ENCODE measurements at regions of chr9 and their contacts with region 1.

Region 1: DNA sequence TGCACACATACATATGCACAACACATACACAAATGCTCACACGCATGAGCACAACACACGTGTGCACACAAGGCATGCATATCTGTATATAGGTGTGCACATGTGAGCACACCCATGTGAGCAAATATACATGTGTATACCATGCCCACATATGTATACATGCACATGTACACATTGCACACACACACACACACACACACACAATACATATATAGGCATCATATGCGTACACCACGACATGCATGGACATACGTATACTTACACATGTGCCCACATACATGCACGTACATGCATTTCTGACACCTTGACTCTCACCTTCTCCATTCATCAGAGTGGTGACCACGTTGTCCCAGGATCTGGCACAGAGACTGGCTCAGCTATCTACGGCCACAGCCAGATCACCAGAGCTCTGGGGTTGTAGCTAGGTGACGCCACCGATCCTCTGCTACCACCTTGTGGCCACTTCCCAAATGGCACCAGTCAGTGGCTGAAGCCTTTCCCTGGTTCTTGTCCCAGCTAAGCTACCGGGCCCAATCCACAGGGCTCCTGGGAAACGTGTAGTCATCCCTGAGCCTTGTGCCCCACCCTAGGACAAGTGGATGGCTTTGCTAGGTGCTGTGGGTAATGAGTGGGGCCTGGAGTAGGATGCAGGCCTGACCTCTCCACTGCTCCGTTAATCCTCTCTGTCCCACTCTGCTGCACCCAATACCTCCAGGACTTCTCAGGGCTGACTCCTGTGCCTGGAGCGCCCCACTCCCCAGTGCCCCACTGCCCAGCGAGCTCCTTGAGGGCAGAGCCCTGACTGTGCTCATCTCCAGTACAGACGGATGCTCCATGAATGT is 194.4 kb downstream of the RGS3 start:
- DNase-seq: peak; percentile 72
- H3K4me3 ChIP-seq: no peak overlapping the region
- H3K27ac ChIP-seq: no peak overlapping the region
- H3K27me3 ChIP-seq: peaks cover 3% of the 10 kb centered on the region
- CTCF ChIP-seq: peak; percentile 97

Region 2: DNA sequence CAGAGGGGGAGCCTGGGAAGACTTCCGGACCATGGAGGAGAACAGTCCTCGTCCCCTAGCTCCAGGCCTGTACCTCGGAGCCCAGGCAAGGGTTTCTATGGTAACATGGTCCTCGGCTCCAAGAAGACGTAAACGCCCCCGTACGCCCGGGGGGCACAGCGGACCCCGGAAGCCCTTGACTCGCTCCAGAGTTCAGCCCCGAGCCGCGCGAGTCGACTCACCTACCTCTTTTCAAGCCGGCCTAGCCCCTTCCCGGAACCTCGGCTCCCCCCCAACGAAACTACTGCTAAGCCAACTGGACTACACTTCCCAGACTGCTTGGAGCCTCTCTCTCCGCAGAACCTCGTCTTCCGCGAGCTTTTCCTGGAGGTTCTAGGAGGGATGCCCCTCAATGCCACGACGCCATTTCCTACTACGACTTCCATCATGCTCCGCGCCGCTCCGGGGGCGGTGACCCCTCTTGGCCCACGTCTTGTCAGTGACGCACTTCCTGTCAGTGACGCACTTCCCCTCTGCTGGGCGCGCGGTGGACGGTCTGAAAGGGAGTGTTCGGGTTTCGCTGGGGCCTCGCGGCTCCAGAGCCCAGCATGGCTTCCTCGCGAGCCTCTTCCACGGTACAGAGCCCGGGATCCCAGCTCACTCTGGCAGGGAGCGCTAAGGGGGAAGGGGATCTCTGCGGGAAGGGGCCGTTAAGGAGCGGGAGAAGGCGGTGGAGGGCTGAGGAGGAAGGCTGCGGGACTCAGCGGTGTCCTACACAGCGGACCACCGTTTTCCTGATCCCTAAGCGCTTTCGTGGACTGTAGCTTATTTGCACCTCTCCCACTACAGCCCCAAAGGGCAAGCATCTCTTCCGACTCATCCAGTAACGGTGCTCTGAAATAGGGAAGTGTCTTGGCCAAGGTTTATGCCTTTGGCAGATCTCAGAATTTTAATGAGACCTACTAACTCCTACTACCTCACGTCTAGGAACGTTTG is 382.5 kb before region 1 on chr9 and contains the starts of genes CDC26 and PRPF4:
- CTCF ChIA-PET with region 1: interaction called, 20 read pairs
- POLR2A ChIA-PET with region 1: interaction called, 3 read pairs
- DNase-seq: peak; percentile 96
- H3K4me3 ChIP-seq: peak within 1 kb of the TSS; percentile 98
- H3K27ac ChIP-seq: peak within 1 kb of the TSS; percentile 94
- H3K27me3 ChIP-seq: no peaks in the 10 kb centered on the region
- CTCF ChIP-seq: no peak
- polyA plus RNA-seq, gene CDC26: 38.0 and 52.6 TPM in 2 replicates
- polyA plus RNA-seq, gene PRPF4: 20.1 and 20.9 TPM in 2 replicates

Region 3: DNA sequence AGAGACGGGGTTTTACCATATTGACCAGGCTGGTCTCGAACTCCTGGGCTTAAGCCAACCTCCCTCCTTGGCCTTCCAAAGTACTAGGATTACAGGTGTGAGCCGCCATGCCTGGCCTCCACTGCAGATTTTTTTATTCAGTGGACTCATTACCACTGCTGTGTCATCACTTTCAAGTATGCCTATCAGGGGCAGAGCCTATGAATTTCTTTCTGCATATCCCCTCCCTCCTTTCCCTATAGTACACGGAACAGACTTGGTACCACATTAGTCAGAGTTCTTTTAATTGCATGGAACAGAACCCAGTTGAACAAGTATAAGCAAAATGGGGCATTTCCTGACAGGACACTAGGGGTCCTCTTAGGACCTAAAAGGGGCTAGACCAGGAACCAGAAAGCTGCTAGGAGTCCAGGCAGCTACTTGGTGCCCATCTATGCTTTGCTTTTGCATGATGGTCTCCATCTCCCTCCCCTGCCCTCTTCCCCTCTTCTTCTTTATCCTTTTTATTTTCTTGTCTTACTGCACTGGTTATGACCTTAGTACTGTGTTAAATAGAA is 302.8 kb before region 1 on chr9:
- CTCF ChIA-PET with region 1: no interaction called
- POLR2A ChIA-PET with region 1: no interaction called
- DNase-seq: no peak
- H3K4me3 ChIP-seq: no peak overlapping the region
- H3K27ac ChIP-seq: no peak overlapping the region
- H3K27me3 ChIP-seq: peaks cover 57% of the 10 kb centered on the region
- CTCF ChIP-seq: peak; percentile 44

Region 4: GRCh38 chr9:113446323-113446740 is 211.6 kb before region 1 on chr9:
- CTCF ChIA-PET with region 1: interaction called, 137 read pairs
- POLR2A ChIA-PET with region 1: no interaction called
- DNase-seq: no peak
- H3K4me3 ChIP-seq: no peak overlapping the region
- H3K27ac ChIP-seq: no peak overlapping the region
- H3K27me3 ChIP-seq: no peaks in the 10 kb centered on the region
- CTCF ChIP-seq: peak; percentile 57

Region 5: DNA sequence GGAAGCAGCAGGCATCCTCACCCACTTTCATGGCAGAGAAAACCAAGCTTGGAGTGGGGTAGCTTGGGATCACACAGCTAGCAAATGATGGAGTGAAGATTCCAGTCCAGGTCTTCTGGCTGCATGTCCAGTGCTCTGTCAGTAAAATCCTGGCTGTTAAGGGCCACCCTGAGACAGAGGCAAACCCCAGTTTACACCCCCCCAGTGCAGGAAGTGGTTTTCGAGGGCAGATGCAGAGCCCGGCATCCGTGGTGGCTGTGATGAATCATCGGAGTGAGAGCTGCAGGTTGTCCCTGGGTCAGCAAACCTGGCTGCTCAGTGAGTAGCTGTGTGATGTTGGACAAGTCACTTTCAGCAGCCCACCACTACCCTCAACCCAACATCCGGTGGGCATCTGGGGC is 79.0 kb before region 1 on chr9:
- CTCF ChIA-PET with region 1: interaction called, 767 read pairs
- POLR2A ChIA-PET with region 1: interaction called, 4 read pairs
- DNase-seq: no peak
- H3K4me3 ChIP-seq: no peak overlapping the region
- H3K27ac ChIP-seq: peak overlapping the region; percentile 81
- H3K27me3 ChIP-seq: no peaks in the 10 kb centered on the region
- CTCF ChIP-seq: no peak

Region 6: GRCh38 chr9:113608082-113608685 is 49.7 kb before region 1 on chr9:
- CTCF ChIA-PET with region 1: interaction called, 767 read pairs
- POLR2A ChIA-PET with region 1: no interaction called
- DNase-seq: no peak
- H3K4me3 ChIP-seq: no peak overlapping the region
- H3K27ac ChIP-seq: no peak overlapping the region
- H3K27me3 ChIP-seq: no peaks in the 10 kb centered on the region
- CTCF ChIP-seq: peak; percentile 38; the same call in 1 of the 2 replicates

Region 7: DNA sequence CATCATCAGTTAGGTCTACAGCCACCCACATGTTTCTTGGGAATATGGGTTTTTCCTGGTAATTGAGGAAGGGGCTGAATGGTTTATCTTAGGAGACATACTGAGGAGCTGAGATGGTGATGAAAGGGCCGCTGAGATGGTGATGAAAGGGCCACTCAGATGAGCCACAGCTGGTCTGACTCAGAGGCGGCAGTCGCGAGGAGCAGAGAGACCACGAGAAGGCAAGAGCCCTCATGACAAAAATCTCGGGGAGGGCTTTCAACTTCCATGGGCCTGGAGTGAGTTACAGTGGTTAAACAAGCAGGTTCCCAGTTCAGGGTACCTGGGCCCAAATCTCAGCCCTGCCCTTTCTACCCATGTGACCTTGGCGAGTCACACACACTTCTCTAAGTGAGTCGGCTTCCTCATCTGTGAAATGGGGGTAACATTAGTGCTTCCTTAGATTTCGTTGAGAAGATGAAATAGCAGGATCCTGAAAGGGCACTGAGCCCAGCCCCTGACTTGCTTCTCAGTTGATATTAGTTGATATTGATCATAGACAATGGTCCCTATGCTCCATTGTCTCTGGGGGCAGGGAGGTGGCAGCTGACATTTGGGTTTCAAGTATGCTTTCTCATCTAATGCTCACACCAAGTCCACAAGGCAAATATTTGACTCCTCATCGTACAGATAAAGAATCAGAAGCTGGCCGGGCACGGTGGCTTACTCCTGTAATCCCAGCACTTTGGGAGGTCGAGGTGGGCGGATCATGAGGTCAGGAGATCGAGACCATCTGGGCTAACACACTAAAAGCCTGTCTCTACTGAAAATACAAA is 24.9 kb before region 1 on chr9:
- CTCF ChIA-PET with region 1: interaction called, 13 read pairs
- POLR2A ChIA-PET with region 1: interaction called, 3 read pairs
- DNase-seq: no peak
- H3K4me3 ChIP-seq: no peak overlapping the region
- H3K27ac ChIP-seq: no peak overlapping the region
- H3K27me3 ChIP-seq: no peaks in the 10 kb centered on the region
- CTCF ChIP-seq: no peak

Region 8: DNA sequence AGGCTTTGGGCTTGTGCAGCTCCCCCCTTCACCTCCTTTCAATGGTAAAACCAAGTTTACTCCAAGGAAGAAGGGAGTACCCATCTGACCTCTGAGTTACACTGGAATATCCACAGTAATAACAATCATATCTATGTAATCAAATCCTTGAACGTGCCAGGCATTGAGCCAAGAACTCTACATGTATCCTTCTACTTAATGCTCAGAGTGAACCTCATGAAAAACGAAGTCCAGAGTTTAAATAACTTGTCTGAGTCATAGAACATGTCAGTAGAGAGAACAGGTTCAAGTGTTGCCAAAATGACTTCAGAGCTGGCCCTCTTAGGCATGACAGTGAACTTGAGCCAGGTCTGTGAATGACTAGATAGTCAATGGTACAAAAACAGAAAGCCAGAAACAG is 54.1 kb after region 1 on chr9:
- CTCF ChIA-PET with region 1: no interaction called
- POLR2A ChIA-PET with region 1: no interaction called
- DNase-seq: peak; percentile 23
- H3K4me3 ChIP-seq: no peak overlapping the region
- H3K27ac ChIP-seq: no peak overlapping the region
- H3K27me3 ChIP-seq: peaks cover 24% of the 10 kb centered on the region
- CTCF ChIP-seq: no peak